Mammary epithelial cell (primary cell): ENCODE measurements at regions of chr1 and their contacts with region 1.

Region 1: DNA sequence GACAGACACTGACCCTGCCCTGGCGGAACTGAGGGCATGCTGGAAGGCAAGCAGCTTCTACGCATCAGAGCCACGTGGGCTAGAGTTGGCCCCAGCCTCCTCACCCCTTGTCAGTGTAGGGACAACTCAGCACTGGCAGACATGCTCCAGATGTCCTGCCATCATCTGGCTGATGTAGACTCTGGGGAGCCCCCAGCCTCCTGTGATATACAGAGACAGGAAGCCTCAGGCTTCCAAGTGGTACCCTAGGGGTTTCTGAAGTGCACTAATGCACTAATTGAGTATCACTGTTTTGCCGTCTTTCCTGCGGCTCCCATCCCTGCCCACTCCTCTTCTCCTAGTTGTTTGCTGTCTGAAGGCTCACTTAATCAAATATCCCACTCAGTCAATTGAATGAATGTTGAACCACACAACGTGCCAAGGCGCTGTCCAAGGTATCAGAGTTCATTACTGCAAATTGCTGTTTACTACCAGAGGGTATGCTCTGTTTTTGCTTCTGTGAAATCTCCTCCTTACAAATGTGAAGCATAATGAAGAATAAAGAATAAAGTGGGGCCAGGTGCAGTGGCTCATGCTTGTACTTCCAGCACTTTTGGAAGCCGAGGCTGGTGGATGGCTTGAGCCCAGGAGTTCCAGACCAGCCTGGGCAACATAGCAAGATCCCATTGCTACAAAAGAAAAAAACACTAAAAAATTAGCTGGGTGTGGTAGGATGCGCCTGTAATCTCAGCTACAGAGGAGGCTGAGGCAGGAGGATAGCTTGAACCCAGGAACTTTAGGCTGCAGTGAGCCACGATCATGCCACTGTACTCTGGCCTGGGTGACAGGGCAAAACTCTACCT is 76.4 kb upstream of the ZBTB18 start:
- DNase-seq: no peak
- H3K4me3 ChIP-seq: no peak overlapping the region
- H3K27ac ChIP-seq: no peak overlapping the region
- H3K4me1 ChIP-seq: no peaks in the 10 kb centered on the region
- H3K27me3 ChIP-seq: no peaks in the 10 kb centered on the region
- CTCF ChIP-seq: no peak

Region 2: DNA sequence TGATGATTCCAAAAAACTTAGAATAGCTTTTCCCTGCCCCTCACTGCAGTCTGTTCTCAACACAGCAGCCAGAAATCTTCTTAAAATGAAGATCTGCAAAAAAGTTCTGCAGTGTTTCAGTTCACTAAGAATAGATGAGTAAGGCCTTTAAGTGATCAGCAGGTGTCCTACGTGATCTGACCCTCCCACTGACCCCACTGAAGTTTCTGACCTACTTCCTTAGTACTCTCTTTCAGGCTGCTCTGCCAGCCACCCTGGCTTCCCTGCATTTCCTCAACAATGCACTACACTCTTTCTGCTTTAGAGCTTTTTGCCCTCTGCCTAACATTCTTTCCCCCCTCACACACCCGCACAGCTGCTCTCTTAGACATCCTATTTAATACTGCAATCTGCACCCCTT is 307.1 kb before region 1 on chr1:
- CTCF ChIA-PET with region 1: no interaction called
- dilution Hi-C with region 1: no loop called
- in situ Hi-C with region 1: no loop called
- intact Hi-C with region 1: no loop called
- DNase-seq: no peak
- H3K4me3 ChIP-seq: no peak overlapping the region
- H3K27ac ChIP-seq: no peak overlapping the region
- H3K4me1 ChIP-seq: peaks cover 7% of the 10 kb centered on the region
- H3K27me3 ChIP-seq: no peaks in the 10 kb centered on the region
- CTCF ChIP-seq: no peak

Region 3: DNA sequence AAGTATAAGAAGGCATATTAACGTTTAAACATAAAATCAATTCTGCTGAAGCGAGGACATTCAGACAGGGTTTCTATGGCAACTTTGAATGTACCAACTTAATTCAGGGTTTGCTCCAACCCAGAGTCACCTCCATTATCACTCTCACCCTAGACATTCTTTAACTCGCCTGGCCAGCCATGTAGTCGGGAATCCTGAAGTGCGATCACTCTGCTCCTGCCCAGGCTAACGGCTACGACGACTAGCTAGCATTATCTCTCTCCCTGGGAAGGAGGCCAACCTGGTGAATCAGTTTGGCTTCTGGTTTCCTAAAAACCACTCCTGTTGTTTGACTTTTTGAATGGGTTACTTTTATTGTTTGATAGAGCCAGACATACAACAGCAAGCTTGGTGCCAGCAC is 37.5 kb after region 1 on chr1:
- CTCF ChIA-PET with region 1: no interaction called
- dilution Hi-C with region 1: loop called (anchors 5 kb)
- in situ Hi-C with region 1: no loop called
- intact Hi-C with region 1: no loop called
- DNase-seq: peak; percentile 48
- H3K4me3 ChIP-seq: no peak overlapping the region
- H3K27ac ChIP-seq: no peak overlapping the region
- H3K4me1 ChIP-seq: no peaks in the 10 kb centered on the region
- H3K27me3 ChIP-seq: no peaks in the 10 kb centered on the region
- CTCF ChIP-seq: no peak